ENCODE measurements at regions of chr20 and their contacts with region 1.

Region 1: DNA sequence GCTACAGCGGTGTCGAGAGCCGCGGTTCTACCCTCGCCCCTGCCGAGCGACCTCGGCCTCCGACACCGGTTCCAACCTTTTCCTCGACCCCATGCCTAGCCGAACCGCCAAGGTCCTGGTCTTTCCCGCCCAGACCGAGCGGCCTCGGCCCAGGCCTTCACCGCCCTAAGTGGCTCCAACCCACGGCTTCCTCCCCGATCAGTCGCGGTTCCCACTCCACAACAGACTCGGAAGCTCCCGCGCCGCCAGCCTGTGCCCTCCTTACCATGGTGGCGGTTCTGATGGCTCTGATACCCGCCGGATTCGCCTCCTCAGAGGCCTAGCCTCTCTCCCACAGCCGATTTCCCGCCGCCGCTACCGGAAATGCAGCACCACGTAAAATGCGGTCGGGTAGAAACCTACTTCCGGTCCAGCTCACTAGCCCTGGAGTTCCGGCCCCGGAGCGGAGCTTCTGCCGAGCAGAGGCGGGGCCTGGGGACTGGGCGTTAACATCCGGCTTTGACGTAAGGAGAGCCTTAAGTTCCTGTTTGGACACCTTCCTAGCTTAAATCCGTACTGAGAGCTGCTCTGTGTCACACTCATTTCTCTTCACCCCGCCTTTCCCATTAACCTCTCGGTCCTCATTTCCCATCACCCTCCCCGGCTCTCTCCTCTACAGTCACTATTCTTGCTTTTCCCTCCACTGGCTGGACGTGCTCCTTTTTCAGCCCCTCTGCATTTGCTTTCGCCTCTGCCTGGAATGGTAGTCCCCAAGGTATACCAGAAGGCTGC is at the start of gene SNRPB:
- DNase-seq: peak; percentile 98
- H3K4me3 ChIP-seq: peak within 1 kb of the TSS; percentile 78 to 87 (median 82)
- H3K27ac ChIP-seq: peak within 1 kb of the TSS; percentile 91 to 95 (median 94)
- H3K4me1 ChIP-seq: peaks cover 25 to 35% (median 32%) of the 10 kb centered on the region in 4 donors
- H3K27me3 ChIP-seq: no peaks in the 10 kb centered on the region
- CTCF ChIP-seq: peak in 1 of 3 experiments; percentile 4
- EP300 ChIP-seq: no peak
- POLR2A ChIP-seq: peak; percentile 76
- total RNA-seq, gene SNRPB: 127 to 258 (median 216) TPM

Region 2: DNA sequence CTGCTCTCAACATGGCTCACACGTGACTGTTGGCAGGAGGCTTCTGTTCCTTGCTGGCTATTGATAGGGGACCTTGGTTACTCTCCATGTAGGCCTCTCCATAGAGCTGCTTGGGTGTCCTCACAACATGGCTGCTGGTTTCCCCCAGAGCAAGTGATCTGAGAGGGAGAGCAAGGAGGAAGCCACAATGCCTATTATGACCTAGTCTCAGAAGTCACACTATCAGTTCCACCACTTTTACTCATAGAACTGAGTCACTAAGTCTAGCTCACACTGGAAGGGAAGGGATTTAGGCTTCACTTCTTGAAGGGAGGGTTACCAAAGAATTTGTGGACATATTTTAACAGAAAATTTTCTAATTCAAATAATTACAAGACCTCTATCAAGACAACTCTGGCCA is 173.1 kb after region 1 on chr20:
- intact Hi-C with region 1: loop called (anchors 10 kb)
- DNase-seq: no peak
- H3K4me3 ChIP-seq: no peak overlapping the region
- H3K27ac ChIP-seq: no peak overlapping the region
- H3K4me1 ChIP-seq: peaks cover 0 to 9% (median 3%) of the 10 kb centered on the region in 4 donors
- H3K27me3 ChIP-seq: no peaks in the 10 kb centered on the region
- CTCF ChIP-seq: no peak
- EP300 ChIP-seq: no peak
- POLR2A ChIP-seq: no peak